Activated T-helper 2 cell treated with anti-CD3 and anti-CD28 coated beads, Interferon-gamma antibody, Interleukin-2, Interleukin-4, amounts not matched to agents 10 μg/mL and 5 μg/mL and 100 μg/mL, durations not matched to agents 14 hours and 24 hours and 36 hours (primary cell): ENCODE measurements at regions of chr5 and their contacts with region 1.

Region 1: GRCh38 chr5:16456103-16456832 is 9.3 kb downstream of the ZNF622 start:
- DNase-seq: no peak
- H3K4me3 Mint-ChIP-seq: peak overlapping the region; percentile 30
- H3K27ac Mint-ChIP-seq: peak overlapping the region; percentile 89
- H3K4me1 Mint-ChIP-seq: peaks cover 48% of the 10 kb centered on the region
- H3K27me3 Mint-ChIP-seq: no peaks in the 10 kb centered on the region

Region 2: GRCh38 chr5:16160706-16161105 is 295.6 kb before region 1 on chr5:
- intact Hi-C with region 1: loop called (anchors 1 kb)
- DNase-seq: no peak
- H3K4me3 Mint-ChIP-seq: no peak overlapping the region
- H3K27ac Mint-ChIP-seq: no peak overlapping the region
- H3K4me1 Mint-ChIP-seq: no peaks in the 10 kb centered on the region
- H3K27me3 Mint-ChIP-seq: no peaks in the 10 kb centered on the region

Region 3: DNA sequence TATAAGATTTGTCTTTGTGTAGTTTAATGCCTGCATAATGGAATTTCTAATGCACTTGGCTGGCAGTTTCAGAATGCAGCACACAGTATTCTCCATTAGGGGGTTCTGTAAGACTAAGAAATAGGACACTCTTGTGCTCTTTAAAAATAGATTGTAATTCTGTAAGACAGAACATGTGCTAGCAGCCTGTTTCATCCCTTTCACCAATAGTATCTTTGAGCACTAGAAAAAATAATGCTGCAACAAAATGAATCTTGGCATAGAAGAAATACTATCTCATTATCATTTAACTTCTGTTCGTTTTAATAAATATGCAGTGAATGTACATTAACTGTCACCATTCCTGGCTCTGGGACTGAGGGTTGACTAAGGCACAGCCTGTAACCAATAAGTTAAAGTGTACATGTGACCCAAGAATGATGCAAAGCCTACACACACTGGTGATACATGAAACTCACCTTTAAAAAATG is 33.1 kb after region 1 on chr5:
- intact Hi-C with region 1: no loop called
- DNase-seq: no peak
- H3K4me3 Mint-ChIP-seq: no peak overlapping the region
- H3K27ac Mint-ChIP-seq: no peak overlapping the region
- H3K4me1 Mint-ChIP-seq: peaks cover 3% of the 10 kb centered on the region
- H3K27me3 Mint-ChIP-seq: no peaks in the 10 kb centered on the region

Region 4: GRCh38 chr5:16585041-16585667 is 128.9 kb after region 1 on chr5:
- intact Hi-C with region 1: no loop called
- DNase-seq: no peak
- H3K4me3 Mint-ChIP-seq: no peak overlapping the region
- H3K27ac Mint-ChIP-seq: no peak overlapping the region
- H3K4me1 Mint-ChIP-seq: peaks cover 14% of the 10 kb centered on the region
- H3K27me3 Mint-ChIP-seq: no peaks in the 10 kb centered on the region

Region 5: GRCh38 chr5:16626663-16627264 is 170.5 kb after region 1 on chr5:
- intact Hi-C with region 1: loop called (anchors 2 kb)
- DNase-seq: peak; percentile 39
- H3K4me3 Mint-ChIP-seq: peak overlapping the region; percentile 5
- H3K27ac Mint-ChIP-seq: peak overlapping the region; percentile 78
- H3K4me1 Mint-ChIP-seq: peaks cover 45% of the 10 kb centered on the region
- H3K27me3 Mint-ChIP-seq: no peaks in the 10 kb centered on the region

Region 6: GRCh38 chr5:16784843-16785791 is 328.8 kb after region 1 on chr5:
- intact Hi-C with region 1: loop called (anchors 10 kb)
- DNase-seq: no peak
- H3K4me3 Mint-ChIP-seq: no peak overlapping the region
- H3K27ac Mint-ChIP-seq: no peak overlapping the region
- H3K4me1 Mint-ChIP-seq: peaks cover 16% of the 10 kb centered on the region
- H3K27me3 Mint-ChIP-seq: peaks cover 11% of the 10 kb centered on the region